Activated CD4-positive, alpha-beta memory T cell treated with anti-CD3 and anti-CD28 coated beads for 36 hours (primary cell): ENCODE measurements at regions of chr1 and their contacts with region 1.

Region 1: DNA sequence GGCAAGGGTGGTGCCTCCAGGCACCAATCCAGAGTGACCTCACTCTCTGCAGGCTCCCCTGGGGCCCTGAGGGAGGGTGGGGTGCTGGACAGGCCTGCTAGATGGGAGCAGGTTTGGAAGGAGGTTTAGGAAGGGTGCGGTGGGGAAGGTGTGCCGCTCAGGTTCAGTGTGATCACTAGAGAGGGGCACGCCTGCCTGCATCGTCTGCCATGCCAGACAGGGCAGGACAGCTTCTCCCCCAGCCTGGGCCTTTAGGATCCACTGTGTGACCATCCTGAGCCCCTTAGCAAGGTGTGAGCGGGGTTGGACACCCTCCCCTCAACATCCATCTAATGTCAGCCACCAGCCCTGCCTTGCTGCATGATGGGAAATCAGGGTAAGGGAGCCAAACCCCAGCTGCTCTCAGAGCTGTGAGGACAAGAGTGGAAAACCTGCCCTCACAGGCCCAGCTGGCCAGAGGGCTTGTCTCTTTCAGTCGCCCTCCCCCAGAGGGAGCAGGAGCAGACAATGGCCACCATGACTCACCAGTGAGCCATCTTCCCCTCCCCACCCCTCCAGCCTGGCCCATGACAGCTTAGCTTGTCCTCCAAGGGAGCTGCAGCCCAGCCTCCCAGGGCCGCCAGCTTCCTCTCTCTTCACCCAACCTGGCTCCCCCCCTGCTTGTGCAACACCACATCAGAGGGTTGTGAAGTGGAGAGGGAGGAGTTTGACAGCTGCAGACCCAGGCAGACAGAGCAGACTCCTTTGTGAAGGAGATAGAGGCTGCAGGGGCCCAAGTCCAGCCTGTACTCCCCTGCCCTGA is 37.0 kb downstream of the NUAK2 start:
- DNase-seq: peak; percentile 95
- H3K4me3 Mint-ChIP-seq: peak overlapping the region; percentile 38
- H3K27ac Mint-ChIP-seq: peak overlapping the region; percentile 68
- H3K4me1 Mint-ChIP-seq: peaks cover 77% of the 10 kb centered on the region
- H3K27me3 Mint-ChIP-seq: no peaks in the 10 kb centered on the region

Region 2: GRCh38 chr1:205088341-205088740 is 196.2 kb before region 1 on chr1:
- CTCF ChIA-PET with region 1: no interaction called
- POLR2A ChIA-PET with region 1: no interaction called
- intact Hi-C with region 1: no loop called
- DNase-seq: no peak
- H3K4me3 Mint-ChIP-seq: no peak overlapping the region
- H3K27ac Mint-ChIP-seq: no peak overlapping the region
- H3K4me1 Mint-ChIP-seq: no peaks in the 10 kb centered on the region
- H3K27me3 Mint-ChIP-seq: no peaks in the 10 kb centered on the region

Region 3: DNA sequence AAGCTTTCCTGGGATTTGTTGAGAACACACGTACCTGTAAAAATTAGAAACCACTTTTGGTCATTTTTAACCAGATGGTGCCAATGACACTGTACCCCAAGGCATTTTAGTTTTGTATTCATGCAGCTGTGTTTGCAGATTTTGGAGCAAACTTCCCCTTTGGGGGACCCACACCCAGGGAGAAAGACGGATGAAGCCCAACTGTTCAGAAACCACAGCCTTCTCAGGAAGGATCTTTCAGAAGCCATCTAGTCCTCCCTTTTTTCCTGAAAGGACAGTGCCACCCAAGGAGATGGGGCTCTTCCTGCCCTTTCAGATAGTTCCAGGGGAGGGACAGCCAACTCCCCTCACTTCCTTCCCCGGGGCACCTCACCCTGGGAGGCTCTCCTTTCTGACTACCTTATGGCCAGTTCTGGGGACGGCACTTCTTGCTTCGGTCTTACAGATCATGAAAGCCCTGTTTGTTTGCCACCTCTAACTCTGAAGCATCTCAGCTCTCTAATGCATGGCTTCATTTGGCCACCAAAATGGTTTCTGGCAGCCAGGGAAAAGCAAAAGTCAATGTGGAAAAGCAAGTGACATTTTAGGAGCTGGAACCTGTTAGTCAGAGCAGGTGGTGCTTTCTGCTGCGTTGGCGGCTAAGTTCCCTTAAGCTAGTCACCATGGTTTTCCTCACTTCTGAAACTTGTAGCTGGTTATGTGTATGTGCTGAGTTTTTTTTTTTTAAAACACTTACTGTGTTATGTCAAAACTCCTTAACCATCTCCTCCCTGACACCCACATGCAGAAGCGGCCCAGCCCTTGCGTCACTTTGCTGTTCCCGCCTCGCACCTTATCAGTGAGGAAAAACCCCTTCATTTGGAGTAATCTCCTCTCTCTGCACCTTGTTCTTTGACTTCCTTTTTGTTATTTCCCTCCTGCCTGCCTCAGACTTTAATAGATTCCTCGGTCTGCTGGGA is 46.7 kb before region 1 on chr1:
- CTCF ChIA-PET with region 1: no interaction called
- POLR2A ChIA-PET with region 1: no interaction called
- intact Hi-C with region 1: loop called (anchors 1 kb)
- DNase-seq: peak; percentile 77
- H3K4me3 Mint-ChIP-seq: peak overlapping the region; percentile 50
- H3K27ac Mint-ChIP-seq: peak overlapping the region; percentile 92
- H3K4me1 Mint-ChIP-seq: peaks cover 41% of the 10 kb centered on the region
- H3K27me3 Mint-ChIP-seq: peaks cover 5% of the 10 kb centered on the region

Region 4: GRCh38 chr1:205273551-205273982 is 11.0 kb before region 1 on chr1:
- CTCF ChIA-PET with region 1: interaction called, 93 read pairs
- POLR2A ChIA-PET with region 1: interaction called, 6 read pairs
- intact Hi-C with region 1: loop called (anchors 1 kb)
- DNase-seq: peak; percentile 91
- H3K4me3 Mint-ChIP-seq: no peak overlapping the region
- H3K27ac Mint-ChIP-seq: no peak overlapping the region
- H3K4me1 Mint-ChIP-seq: peaks cover 30% of the 10 kb centered on the region
- H3K27me3 Mint-ChIP-seq: no peaks in the 10 kb centered on the region

Region 5: DNA sequence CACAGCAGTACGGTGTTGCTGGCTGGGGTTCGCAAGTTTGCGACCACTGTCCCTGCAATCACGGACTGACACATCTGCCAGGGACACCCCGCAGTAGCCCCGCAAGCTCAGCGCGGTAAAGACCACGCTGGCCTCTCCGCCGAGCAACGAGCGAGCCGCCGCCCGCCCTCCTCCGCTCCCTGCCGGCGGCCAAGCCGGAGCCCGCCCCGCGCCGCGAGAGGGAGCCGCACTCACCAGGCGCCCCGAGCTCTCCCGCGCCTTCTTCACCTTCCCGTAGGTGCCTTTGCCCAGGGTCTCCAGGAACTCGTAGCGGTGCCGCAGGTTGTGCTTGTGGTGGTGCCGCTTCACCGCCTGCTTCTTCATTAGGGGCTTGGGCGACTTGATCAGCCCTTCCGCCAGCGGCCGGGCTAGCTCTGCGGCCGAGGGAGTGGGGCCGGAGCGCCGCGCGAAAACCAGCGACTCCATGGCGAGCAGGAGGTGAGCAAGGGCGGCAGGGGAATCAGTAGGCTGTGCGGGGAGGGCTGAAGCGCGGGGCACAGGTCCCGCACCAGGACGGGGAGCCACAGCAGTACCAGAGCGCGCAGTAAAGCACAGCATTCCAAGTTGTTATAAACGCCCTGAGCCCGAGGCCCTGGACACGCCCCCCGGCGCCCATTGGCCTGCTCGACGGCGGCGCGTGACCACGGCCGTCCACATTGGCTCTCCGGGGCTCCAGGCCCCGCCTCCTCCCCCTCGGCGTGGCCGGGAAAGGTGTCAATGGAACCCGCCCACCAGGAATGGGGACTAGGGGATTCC is 36.8 kb after region 1 on chr1 and contains the start of gene NUAK2:
- CTCF ChIA-PET with region 1: interaction called, 1,370 read pairs
- POLR2A ChIA-PET with region 1: interaction called, 24 read pairs
- intact Hi-C with region 1: loop called (anchors 1 kb)
- DNase-seq: peak; percentile 89
- H3K4me3 Mint-ChIP-seq: peak within 1 kb of the TSS; percentile 88
- H3K27ac Mint-ChIP-seq: peak within 1 kb of the TSS; percentile 72
- H3K4me1 Mint-ChIP-seq: peaks cover 60% of the 10 kb centered on the region
- H3K27me3 Mint-ChIP-seq: peaks cover 2% of the 10 kb centered on the region
- total RNA-seq, gene NUAK2: 4.4 to 4.5 TPM

Region 6: DNA sequence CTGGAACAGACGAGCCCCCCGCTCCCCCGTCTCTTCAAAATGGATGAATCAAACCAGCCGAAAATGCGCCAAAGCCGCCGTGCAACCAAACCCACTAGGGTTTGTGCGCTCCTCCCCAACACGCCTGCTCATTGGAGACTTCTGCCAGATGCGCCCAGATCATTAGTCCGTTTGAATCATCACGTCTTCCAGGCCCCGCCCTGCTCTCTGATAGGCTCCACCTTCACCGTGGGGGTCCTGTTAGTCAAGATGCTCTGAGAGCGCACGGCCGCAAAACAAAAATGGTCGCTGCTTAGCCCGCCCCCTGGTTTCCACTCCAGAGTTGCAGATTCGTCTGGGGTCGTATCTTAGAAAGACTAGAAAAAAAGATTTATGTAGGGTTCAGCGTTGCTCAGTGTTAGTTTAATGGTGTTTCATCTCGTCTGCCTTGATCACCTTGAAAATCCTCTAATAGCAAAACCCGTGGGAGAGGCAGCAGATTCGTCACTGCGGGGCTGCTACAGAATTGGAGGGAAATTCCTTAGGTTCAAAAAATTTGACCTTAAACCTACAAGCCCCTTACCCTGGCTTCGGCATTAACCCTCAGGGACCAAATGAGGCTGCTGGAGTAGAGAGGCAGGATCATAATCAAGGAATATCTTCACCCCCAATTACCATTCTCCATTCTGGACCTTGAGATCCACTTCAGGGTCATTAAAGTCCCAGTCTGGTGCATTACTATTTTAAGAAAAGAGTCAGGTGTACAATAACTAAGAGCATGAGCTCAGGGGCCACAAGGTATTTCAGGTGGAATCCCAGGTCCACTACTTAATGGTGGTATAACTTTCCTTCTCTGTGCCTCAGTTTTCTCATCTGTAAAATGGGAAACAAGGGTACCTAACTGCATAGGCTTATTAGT is 465.8 kb after region 1 on chr1 and contains the start of gene NUCKS1:
- CTCF ChIA-PET with region 1: no interaction called
- POLR2A ChIA-PET with region 1: no interaction called
- intact Hi-C with region 1: loop called (anchors 5 kb)
- DNase-seq: peak; percentile 98
- H3K4me3 Mint-ChIP-seq: peak within 1 kb of the TSS; percentile 93
- H3K27ac Mint-ChIP-seq: peak within 1 kb of the TSS; percentile 99
- H3K4me1 Mint-ChIP-seq: peaks cover 30% of the 10 kb centered on the region
- H3K27me3 Mint-ChIP-seq: peaks cover 1% of the 10 kb centered on the region
- total RNA-seq, gene NUCKS1: 149 to 202 TPM